ENCODE measurements at regions of chr14 and their contacts with region 1.

Region 1: DNA sequence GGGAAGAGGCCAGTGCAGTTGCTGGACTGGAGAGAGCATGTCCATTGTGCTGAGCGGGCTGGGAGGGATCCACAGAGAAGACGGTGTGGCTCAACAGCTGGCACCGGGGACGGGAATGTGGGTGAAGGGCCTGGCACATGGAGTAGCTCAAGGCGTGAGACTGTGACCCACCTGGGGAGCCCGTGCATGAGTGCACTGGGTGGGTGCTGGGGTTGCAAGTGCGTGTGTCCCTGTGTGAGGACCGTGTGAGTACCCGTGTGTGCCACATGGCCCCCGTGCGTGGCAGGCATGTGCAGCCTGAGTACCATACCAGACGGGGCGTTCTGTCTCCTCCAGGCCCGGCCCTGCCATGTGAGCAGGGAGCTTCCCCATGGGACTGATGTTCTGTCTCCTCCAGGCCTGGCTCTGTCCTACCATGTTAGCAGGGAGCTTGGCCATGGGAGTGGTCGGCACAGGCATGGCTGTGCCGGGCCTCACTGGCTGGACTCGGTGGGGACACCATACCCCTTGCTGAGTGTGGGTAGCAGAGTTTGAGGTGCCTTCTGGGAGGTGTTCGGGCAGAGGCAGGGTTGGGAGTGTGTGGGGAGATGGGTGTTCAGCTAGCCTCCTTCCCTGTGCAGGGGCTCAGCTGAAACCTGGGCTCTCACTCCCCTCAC is 234.4 kb downstream of the TMEM121 start:
- DNase-seq: peak; percentile 29
- H3K4me3 ChIP-seq: no peak overlapping the region
- H3K27ac ChIP-seq: no peak overlapping the region
- H3K4me1 ChIP-seq: peaks cover 0 to 6% (median 2%) of the 10 kb centered on the region in 4 donors
- H3K27me3 ChIP-seq: no peaks in the 10 kb centered on the region
- CTCF ChIP-seq: no peak
- EP300 ChIP-seq: no peak
- POLR2A ChIP-seq: no peak

Region 2: GRCh38 chr14:105617201-105617777 is 143.5 kb before region 1 on chr14:
- intact Hi-C with region 1: loop called (anchors 5 kb)
- DNase-seq: no peak
- H3K4me3 ChIP-seq: no peak overlapping the region
- H3K27ac ChIP-seq: no peak overlapping the region
- H3K4me1 ChIP-seq: peaks cover 0 to 17% (median 4%) of the 10 kb centered on the region in 4 donors
- H3K27me3 ChIP-seq: no peaks in the 10 kb centered on the region
- CTCF ChIP-seq: no peak
- EP300 ChIP-seq: no peak
- POLR2A ChIP-seq: no peak

Region 3: GRCh38 chr14:105908481-105908911 is 147.7 kb after region 1 on chr14:
- intact Hi-C with region 1: no loop called
- DNase-seq: no peak
- H3K4me3 ChIP-seq: no peak overlapping the region
- H3K27ac ChIP-seq: no peak overlapping the region
- H3K4me1 ChIP-seq: no peaks in the 10 kb centered on the region
- H3K27me3 ChIP-seq: no peaks in the 10 kb centered on the region
- CTCF ChIP-seq: no peak
- EP300 ChIP-seq: no peak
- POLR2A ChIP-seq: no peak